Caco-2 (cell line): ENCODE measurements at regions of chr7 and their contacts with region 1.

Region 1: GRCh38 chr7:107462740-107463444 is 7.0 kb upstream of the GPR22 start:
- DNase-seq: peak; percentile 61 to 63
- H3K4me3 ChIP-seq: no peak overlapping the region
- H3K4me3 Mint-ChIP-seq: no peak overlapping the region
- H3K27ac Mint-ChIP-seq: no peak overlapping the region
- H3K4me1 ChIP-seq: no peaks in the 10 kb centered on the region
- H3K4me1 Mint-ChIP-seq: no peaks in the 10 kb centered on the region
- H3K27me3 ChIP-seq: no peaks in the 10 kb centered on the region
- H3K27me3 Mint-ChIP-seq: no peaks in the 10 kb centered on the region
- CTCF ChIP-seq: peak; percentile 68 to 79

Region 2: GRCh38 chr7:107501593-107501992 is 38.7 kb after region 1 on chr7:
- CTCF ChIA-PET with region 1: interaction called, 7 read pairs
- POLR2A ChIA-PET with region 1: no interaction called
- intact Hi-C with region 1: loop called (anchors 1 kb)
- DNase-seq: peak in 1 of 2 experiments; percentile 38
- H3K4me3 ChIP-seq: no peak overlapping the region
- H3K4me3 Mint-ChIP-seq: no peak overlapping the region
- H3K27ac Mint-ChIP-seq: no peak overlapping the region
- H3K4me1 ChIP-seq: peaks cover 10% of the 10 kb centered on the region
- H3K4me1 Mint-ChIP-seq: no peaks in the 10 kb centered on the region
- H3K27me3 ChIP-seq: no peaks in the 10 kb centered on the region
- H3K27me3 Mint-ChIP-seq: no peaks in the 10 kb centered on the region
- CTCF ChIP-seq: peak; percentile 12 to 49

Region 3: GRCh38 chr7:107563775-107564552 is 101.1 kb after region 1 on chr7 and contains the starts of genes COG5 and DUS4L:
- CTCF ChIA-PET with region 1: interaction called, 5 read pairs
- POLR2A ChIA-PET with region 1: no interaction called
- intact Hi-C with region 1: loop called (anchors 5 kb)
- DNase-seq: peak; percentile 84 to 88
- H3K4me3 ChIP-seq: peak within 1 kb of the TSS; percentile 85
- H3K4me3 Mint-ChIP-seq: peak within 1 kb of the TSS; percentile 94
- H3K27ac Mint-ChIP-seq: peak within 1 kb of the TSS; percentile 95
- H3K4me1 ChIP-seq: peaks cover 8% of the 10 kb centered on the region
- H3K4me1 Mint-ChIP-seq: peaks cover 43% of the 10 kb centered on the region
- H3K27me3 ChIP-seq: no peaks in the 10 kb centered on the region
- H3K27me3 Mint-ChIP-seq: no peaks in the 10 kb centered on the region
- CTCF ChIP-seq: no peak
- total RNA-seq, gene COG5: 43.9 and 45.5 TPM in 2 replicates
- total RNA-seq, gene DUS4L: 17.5 and 19.3 TPM in 2 replicates

Region 4: DNA sequence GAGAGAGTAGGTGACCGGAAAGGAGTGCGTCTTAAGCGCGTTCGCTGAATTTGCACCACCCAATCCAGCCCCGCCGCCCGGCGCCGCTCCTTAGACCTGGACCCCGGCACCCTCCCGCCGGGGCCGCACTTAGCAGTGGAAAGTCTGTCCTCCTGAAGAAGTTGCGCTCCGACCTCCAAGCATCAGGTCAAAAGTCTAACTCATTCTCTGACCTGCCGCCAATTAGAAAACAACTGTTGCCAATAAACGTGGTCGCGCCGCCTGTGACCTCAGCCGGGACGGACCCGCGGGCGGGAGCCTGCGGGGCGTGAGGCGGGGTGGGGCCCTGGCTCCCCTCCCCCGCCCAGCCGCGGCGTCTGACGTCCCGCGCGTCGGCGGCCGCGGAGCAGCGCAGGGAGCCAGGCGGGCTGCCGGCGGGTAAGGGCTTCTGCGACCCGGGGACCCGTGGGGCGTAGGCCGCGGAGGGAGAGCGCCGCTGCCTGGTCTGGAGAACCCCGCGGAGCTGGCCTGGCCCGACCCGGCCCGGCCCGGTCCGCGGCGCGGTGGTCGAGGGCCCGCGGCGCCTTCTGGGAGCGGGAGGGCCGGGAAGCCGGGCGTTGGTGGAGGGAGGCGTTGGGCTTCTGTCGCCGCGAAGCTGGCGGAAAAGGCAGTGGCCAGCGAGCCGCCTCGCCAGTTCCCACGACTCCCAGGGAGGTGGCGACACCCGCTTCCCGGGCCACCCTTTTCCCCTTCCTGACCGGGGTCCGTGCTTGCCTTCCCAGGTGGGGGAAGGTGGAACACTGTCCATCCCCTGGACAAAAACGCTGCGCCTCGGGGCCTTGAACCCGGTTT is 117.2 kb after region 1 on chr7 and contains the start of gene BCAP29:
- CTCF ChIA-PET with region 1: no interaction called
- POLR2A ChIA-PET with region 1: no interaction called
- intact Hi-C with region 1: loop called (anchors 1 kb)
- DNase-seq: peak; percentile 88 to 91
- H3K4me3 ChIP-seq: peak within 1 kb of the TSS; percentile 79
- H3K4me3 Mint-ChIP-seq: peak within 1 kb of the TSS; percentile 90
- H3K27ac Mint-ChIP-seq: peak within 1 kb of the TSS; percentile 94
- H3K4me1 ChIP-seq: peaks cover 9% of the 10 kb centered on the region
- H3K4me1 Mint-ChIP-seq: peaks cover 7% of the 10 kb centered on the region
- H3K27me3 ChIP-seq: no peaks in the 10 kb centered on the region
- H3K27me3 Mint-ChIP-seq: no peaks in the 10 kb centered on the region
- CTCF ChIP-seq: peak; percentile 14 to 55
- total RNA-seq, gene BCAP29: 30.4 and 35.3 TPM in 2 replicates

Region 5: DNA sequence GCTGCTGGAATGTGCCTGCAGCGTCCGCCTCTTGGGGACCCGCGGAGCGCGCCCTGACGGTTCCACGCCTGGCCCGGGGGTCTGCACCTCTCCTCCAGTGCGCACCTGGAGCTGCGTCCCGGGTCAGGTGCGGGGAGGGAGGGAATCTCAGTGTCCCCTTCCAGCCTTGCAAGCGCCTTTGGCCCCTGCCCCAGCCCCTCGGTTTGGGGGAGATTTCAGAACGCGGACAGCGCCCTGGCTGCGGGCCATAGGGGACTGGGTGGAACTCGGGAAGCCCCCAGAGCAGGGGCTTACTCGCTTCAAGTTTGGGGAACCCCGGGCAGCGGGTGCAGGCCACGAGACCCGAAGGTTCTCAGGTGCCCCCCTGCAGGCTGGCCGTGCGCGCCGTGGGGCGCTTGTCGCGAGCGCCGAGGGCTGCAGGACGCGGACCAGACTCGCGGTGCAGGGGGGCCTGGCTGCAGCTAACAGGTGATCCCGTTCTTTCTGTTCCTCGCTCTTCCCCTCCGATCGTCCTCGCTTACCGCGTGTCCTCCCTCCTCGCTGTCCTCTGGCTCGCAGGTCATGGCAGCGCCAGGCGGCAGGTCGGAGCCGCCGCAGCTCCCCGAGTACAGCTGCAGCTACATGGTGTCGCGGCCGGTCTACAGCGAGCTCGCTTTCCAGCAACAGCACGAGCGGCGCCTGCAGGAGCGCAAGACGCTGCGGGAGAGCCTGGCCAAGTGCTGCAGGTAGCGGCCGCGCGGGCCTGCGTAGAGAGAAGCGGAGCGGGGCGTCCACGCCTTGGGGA is 198.4 kb after region 1 on chr7:
- CTCF ChIA-PET with region 1: interaction called, 5 read pairs
- POLR2A ChIA-PET with region 1: no interaction called
- intact Hi-C with region 1: loop called (anchors 1 kb)
- DNase-seq: peak; percentile 72 to 74
- H3K4me3 ChIP-seq: peak overlapping the region; percentile 57
- H3K4me3 Mint-ChIP-seq: peak overlapping the region; percentile 78
- H3K27ac Mint-ChIP-seq: no peak overlapping the region
- H3K4me1 ChIP-seq: no peaks in the 10 kb centered on the region
- H3K4me1 Mint-ChIP-seq: peaks cover 5% of the 10 kb centered on the region
- H3K27me3 ChIP-seq: peaks cover 6% of the 10 kb centered on the region; the same call in 1 of the 2 replicates
- H3K27me3 Mint-ChIP-seq: peaks cover 23% of the 10 kb centered on the region
- CTCF ChIP-seq: peak in 1 of 2 experiments; percentile 44

Region 6: DNA sequence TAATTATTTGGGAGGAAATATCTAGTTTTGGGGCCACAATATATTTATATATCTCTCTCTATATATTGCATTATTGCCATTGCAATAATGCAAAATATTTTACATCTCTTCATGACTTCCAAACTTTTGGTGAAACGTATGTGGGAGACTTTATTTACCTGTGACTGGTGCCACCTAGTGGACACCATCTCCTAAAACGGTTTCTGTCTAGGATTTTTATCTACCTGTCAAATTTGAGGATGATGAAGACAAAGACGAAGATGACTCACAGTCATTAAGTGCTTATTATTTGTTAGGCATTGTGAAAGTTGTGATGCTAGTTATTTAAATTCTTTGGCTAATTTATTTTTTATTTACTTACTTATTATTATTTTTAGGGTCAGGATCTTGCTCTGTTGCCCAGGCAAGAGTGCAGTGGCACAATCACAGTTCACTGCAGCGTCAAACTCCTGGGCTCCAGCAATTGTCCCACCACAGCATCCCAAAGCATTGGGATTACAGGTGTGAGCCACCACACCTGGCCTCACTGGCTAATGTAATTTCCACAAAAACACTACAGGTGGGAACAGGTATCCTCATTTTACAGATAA is 262.4 kb after region 1 on chr7:
- CTCF ChIA-PET with region 1: interaction called, 12 read pairs
- POLR2A ChIA-PET with region 1: no interaction called
- intact Hi-C with region 1: loop called (anchors 1 kb)
- DNase-seq: peak in 1 of 2 experiments; percentile 60
- H3K4me3 ChIP-seq: no peak overlapping the region
- H3K4me3 Mint-ChIP-seq: no peak overlapping the region
- H3K27ac Mint-ChIP-seq: no peak overlapping the region
- H3K4me1 ChIP-seq: 0 out of 2 replicates have a peak, but pooled peaks cover 4% of the 10 kb centered on the region
- H3K4me1 Mint-ChIP-seq: peaks cover 5% of the 10 kb centered on the region
- H3K27me3 ChIP-seq: no peaks in the 10 kb centered on the region
- H3K27me3 Mint-ChIP-seq: peaks cover 14% of the 10 kb centered on the region
- CTCF ChIP-seq: peak; percentile 60 to 66

Region 7: DNA sequence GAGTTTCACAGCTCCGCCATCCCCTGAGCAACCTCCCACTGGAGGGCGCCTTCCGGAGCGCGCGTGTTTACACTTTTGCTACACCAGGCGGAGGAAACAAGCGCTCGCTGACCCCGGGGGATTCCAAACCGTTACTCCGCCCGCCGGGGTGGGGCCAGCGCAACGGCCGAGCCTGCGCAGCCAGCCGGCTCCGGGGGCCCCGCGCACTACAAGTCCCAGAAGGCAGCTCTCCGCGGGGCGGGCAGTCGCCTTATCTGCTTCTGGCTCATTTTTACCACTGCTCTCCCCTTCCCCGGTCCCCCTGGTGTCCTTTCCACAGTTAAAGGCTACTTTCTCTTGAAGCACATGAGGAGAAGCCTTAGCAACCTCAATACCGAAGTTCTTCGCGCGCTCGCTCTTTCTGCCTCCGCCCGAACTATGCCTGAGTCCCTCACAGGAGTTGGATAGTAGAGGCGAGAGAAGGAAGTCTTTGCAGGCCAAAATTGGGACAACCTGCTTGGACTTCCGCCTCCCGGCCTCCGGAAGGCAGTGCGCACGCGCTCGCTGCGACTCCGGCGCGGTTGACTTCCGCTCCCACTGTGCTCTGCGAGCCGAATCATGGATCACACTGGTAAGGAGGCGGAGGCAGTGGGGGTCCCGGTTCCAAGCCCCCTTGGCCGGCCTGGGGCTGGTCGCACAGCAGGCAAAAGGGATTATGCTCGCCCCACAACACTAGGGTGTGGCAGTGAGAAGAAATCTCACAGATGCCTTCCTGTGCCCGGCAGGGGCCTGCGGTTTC is 280.9 kb after region 1 on chr7 and contains the start of gene CBLL1:
- CTCF ChIA-PET with region 1: interaction called, 11 read pairs
- POLR2A ChIA-PET with region 1: no interaction called
- intact Hi-C with region 1: no loop called
- DNase-seq: peak; percentile 96 to 98
- H3K4me3 ChIP-seq: peak within 1 kb of the TSS; percentile 90
- H3K4me3 Mint-ChIP-seq: peak within 1 kb of the TSS; percentile 99
- H3K27ac Mint-ChIP-seq: peak within 1 kb of the TSS; percentile 98
- H3K4me1 ChIP-seq: peaks cover 10% of the 10 kb centered on the region
- H3K4me1 Mint-ChIP-seq: peaks cover 22% of the 10 kb centered on the region
- H3K27me3 ChIP-seq: no peaks in the 10 kb centered on the region
- H3K27me3 Mint-ChIP-seq: peaks cover 5% of the 10 kb centered on the region
- CTCF ChIP-seq: peak; percentile 47 to 87
- total RNA-seq, gene CBLL1: 35.9 and 39.1 TPM in 2 replicates